Upper lobe of right lung (tissue), 1 donor: ENCODE measurements at regions of chr16 and their contacts with region 1.

Region 1: DNA sequence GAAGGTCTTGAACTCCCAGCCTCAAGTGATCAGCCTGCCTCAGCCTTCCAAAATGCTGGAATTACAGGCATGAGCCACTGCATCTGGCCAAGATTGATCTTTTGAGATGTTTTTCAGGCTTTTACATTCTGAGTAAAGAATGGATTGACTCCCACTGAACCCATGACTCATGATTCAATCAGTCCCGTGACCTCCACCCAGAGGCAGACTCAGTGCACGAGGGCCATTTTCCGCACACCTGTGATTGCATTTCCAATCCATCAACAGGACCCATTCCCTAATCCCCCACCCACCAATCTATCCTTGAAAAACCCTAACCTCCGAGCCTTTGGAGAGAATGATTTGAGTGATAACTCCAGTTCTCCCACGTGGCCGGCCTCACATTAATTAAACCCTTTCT is 40.4 kb upstream of the PRKCB start:
- DNase-seq: no peak
- ATAC-seq: no peak
- H3K4me3 ChIP-seq: no peak overlapping the region
- H3K27ac ChIP-seq: no peak overlapping the region
- H3K4me1 ChIP-seq: no peaks in the 10 kb centered on the region
- H3K27me3 ChIP-seq: no peaks in the 10 kb centered on the region
- CTCF ChIP-seq: no peak

Region 2: GRCh38 chr16:23999663-24000062 is 204.3 kb after region 1 on chr16:
- intact Hi-C with region 1: no loop called
- DNase-seq: no peak
- ATAC-seq: no peak
- H3K4me3 ChIP-seq: no peak overlapping the region
- H3K27ac ChIP-seq: no peak overlapping the region
- H3K4me1 ChIP-seq: no peaks in the 10 kb centered on the region
- H3K27me3 ChIP-seq: no peaks in the 10 kb centered on the region
- CTCF ChIP-seq: no peak

Region 3: GRCh38 chr16:24010440-24011089 is 215.2 kb after region 1 on chr16:
- intact Hi-C with region 1: loop called (anchors 10 kb)
- DNase-seq: peak; percentile 79
- ATAC-seq: peak; percentile 90
- H3K4me3 ChIP-seq: no peak overlapping the region
- H3K27ac ChIP-seq: no peak overlapping the region
- H3K4me1 ChIP-seq: peaks cover 3% of the 10 kb centered on the region
- H3K27me3 ChIP-seq: no peaks in the 10 kb centered on the region
- CTCF ChIP-seq: peak; percentile 80